GM10248 (cell line): ENCODE measurements at regions of chr2 and their contacts with region 1.

Region 1: GRCh38 chr2:36663851-36664695 is 32.4 kb upstream of the VIT start:
- DNase-seq: peak; percentile 49
- CTCF ChIP-seq: peak; percentile 77

Region 2: GRCh38 chr2:36650031-36650430 is 14.0 kb before region 1 on chr2:
- CTCF ChIA-PET with region 1: interaction called, 17 read pairs
- POLR2A ChIA-PET with region 1: no interaction called
- DNase-seq: peak; percentile 50
- CTCF ChIP-seq: no peak

Region 3: GRCh38 chr2:36677386-36677785 is 13.3 kb after region 1 on chr2:
- CTCF ChIA-PET with region 1: interaction called, 41 read pairs
- POLR2A ChIA-PET with region 1: no interaction called
- DNase-seq: no peak
- CTCF ChIP-seq: no peak

Region 4: DNA sequence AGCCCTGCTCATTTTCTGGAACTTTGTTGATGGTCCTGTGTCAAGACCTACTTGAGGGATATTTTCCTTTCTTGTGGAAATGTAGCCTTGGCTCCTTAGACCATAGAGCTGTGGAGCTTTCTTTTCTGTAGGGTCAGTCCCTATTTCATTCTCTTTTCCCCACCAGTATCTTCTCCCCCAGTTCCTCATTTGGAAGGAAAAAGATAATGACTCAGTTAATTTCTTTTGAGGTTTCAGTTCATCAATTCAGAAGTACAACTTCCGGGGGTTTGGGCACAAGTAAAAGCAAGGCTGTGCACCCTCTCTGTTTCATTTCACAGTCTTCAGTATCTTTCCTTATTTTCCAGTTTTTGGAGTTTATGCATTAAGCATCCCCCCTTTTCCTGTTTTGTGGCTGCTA is 936.7 kb after region 1 on chr2:
- CTCF ChIA-PET with region 1: no interaction called
- POLR2A ChIA-PET with region 1: no interaction called
- DNase-seq: peak; percentile 38
- CTCF ChIP-seq: no peak